CD4-positive, alpha-beta T cell (primary cell): ENCODE measurements at regions of chr5 and their contacts with region 1.

Region 1: GRCh38 chr5:179732417-179732917 is at the start of gene MAML1:
- DNase-seq: peak; percentile 98 to 100 (median 99)
- ATAC-seq: peak; percentile 92
- H3K4me3 ChIP-seq: peak within 1 kb of the TSS; percentile 86
- H3K4me3 Mint-ChIP-seq: peak within 1 kb of the TSS; percentile 99
- H3K27ac ChIP-seq: peak within 1 kb of the TSS; percentile 67 to 84
- H3K27ac Mint-ChIP-seq: peak within 1 kb of the TSS; percentile 84
- H3K4me1 ChIP-seq: peaks cover 42% of the 10 kb centered on the region
- H3K4me1 Mint-ChIP-seq: peaks cover 47% of the 10 kb centered on the region
- H3K27me3 ChIP-seq: no peaks in the 10 kb centered on the region
- H3K27me3 Mint-ChIP-seq: no peaks in the 10 kb centered on the region
- CTCF ChIP-seq: no peak
- total RNA-seq, gene MAML1: 21.8 to 22.2 TPM

Region 2: GRCh38 chr5:179559284-179560252 is 172.9 kb before region 1 on chr5:
- CTCF ChIA-PET with region 1: no interaction called
- POLR2A ChIA-PET with region 1: interaction called, 12 read pairs
- intact Hi-C with region 1: no loop called
- DNase-seq: peak; percentile 65 to 95 (median 84)
- ATAC-seq: peak; percentile 99
- H3K4me3 ChIP-seq: peak overlapping the region; percentile 60
- H3K4me3 Mint-ChIP-seq: peak overlapping the region; percentile 90
- H3K27ac ChIP-seq: peak overlapping the region; percentile 4 to 16
- H3K27ac Mint-ChIP-seq: peak overlapping the region; percentile 89
- H3K4me1 ChIP-seq: peaks cover 10% of the 10 kb centered on the region
- H3K4me1 Mint-ChIP-seq: peaks cover 28% of the 10 kb centered on the region
- H3K27me3 ChIP-seq: no peaks in the 10 kb centered on the region
- H3K27me3 Mint-ChIP-seq: no peaks in the 10 kb centered on the region
- CTCF ChIP-seq: no peak

Region 3: DNA sequence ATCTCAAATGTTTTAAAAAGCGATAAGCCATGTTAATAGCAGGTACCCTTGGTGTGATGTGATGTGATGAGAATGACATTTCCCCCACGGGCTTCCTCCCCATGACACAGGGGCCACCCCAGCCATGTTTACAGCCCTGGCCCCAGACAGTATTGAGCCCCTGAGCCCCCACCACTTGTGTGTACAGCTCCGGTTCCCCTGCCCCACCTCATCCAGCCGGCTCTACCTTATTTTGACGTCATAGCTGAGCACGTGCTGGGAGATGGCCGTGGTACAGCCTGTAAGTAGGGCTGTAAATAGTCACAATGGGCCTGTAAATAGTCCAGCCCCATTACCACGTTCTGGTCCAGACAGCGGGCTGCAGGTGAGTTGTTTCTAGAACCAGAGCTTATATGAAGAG is 84.1 kb before region 1 on chr5:
- CTCF ChIA-PET with region 1: no interaction called
- POLR2A ChIA-PET with region 1: no interaction called
- intact Hi-C with region 1: no loop called
- DNase-seq: no peak
- ATAC-seq: no peak
- H3K4me3 ChIP-seq: no peak overlapping the region
- H3K4me3 Mint-ChIP-seq: no peak overlapping the region
- H3K27ac ChIP-seq: no peak overlapping the region
- H3K27ac Mint-ChIP-seq: no peak overlapping the region
- H3K4me1 ChIP-seq: no peaks in the 10 kb centered on the region
- H3K4me1 Mint-ChIP-seq: no peaks in the 10 kb centered on the region
- H3K27me3 ChIP-seq: no peaks in the 10 kb centered on the region
- H3K27me3 Mint-ChIP-seq: no peaks in the 10 kb centered on the region
- CTCF ChIP-seq: no peak

Region 4: DNA sequence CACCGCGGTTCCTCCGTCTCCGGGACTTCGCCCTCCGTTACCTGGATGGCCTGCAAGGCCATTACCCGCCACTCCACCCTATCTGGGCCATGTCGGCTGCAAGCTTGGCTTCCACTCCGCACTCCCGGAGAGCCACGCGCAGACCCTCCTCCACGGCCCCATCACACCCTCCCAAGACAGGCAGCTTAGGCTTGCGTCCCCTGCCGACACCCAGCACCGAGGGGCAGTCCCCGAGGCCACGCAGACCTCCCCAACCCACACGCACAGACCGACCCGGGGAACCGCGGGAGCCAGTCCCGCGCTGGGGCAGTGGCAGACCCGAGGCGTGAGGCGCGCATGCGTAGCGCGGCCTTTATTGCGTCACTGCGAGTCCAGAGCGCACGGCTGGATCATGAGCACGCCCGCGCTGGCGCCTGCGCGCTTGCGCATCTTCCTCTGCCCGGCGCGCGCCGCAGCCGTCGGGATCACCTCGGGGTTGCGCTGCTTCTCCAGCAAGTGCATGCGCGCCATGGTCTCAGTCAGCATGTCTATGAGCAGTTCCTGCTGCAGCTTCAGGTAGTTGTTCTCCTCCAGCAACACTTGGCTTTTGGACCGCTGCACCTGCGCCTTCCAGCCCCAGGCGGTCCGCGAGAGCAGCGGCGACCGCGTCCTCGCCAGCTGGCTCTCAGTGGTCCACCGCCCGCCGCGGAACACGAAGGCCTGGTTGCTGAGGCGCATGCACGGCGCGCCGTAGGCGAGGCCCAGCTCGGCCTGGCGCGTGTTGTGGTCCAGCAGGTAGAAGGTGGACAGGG is 54.0 kb before region 1 on chr5:
- CTCF ChIA-PET with region 1: no interaction called
- POLR2A ChIA-PET with region 1: interaction called, 19 read pairs
- intact Hi-C with region 1: loop called (anchors 1 to 5 kb)
- DNase-seq: peak; percentile 83 to 98 (median 92)
- ATAC-seq: peak; percentile 86
- H3K4me3 ChIP-seq: peak overlapping the region; percentile 99
- H3K4me3 Mint-ChIP-seq: peak overlapping the region; percentile 97
- H3K27ac ChIP-seq: peak overlapping the region; percentile 83 to 85
- H3K27ac Mint-ChIP-seq: peak overlapping the region; percentile 98
- H3K4me1 ChIP-seq: peaks cover 36% of the 10 kb centered on the region
- H3K4me1 Mint-ChIP-seq: peaks cover 35% of the 10 kb centered on the region
- H3K27me3 ChIP-seq: no peaks in the 10 kb centered on the region
- H3K27me3 Mint-ChIP-seq: no peaks in the 10 kb centered on the region
- CTCF ChIP-seq: no peak

Region 5: DNA sequence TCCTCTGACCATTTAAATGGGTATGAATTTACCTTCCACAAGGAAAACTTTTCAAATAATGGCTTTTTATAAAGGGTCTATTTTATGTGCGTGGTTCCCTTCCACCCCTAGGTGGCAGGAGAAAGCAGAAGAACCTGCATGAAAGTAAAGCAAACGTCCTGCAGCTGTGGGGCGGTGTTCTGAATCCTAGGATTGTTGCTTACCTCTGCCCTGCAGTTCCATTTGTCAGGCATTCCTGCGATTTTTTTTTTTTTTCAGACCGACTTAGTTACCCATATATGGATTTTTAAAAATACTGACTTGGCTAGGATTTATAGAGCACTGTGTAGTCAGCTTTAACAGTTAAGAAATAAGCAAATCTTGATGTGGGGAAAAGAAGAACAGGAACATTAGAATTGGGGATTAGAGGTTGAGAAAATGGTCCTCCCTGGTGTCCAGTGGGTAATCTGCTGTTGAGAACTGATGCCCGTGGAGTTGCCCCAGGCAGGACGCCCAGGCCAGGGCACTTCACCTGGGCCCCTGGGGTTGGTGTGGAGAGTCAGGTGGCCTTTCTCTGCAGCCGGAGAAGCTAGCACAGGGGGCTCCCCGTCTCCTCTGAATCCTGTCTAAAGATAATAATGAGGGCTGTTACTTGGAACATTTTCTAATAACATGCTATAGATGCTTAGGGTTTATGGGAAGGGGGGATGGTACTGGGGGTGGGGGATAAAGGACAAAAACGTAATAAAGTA is 30.9 kb after region 1 on chr5:
- CTCF ChIA-PET with region 1: interaction called, 3 read pairs
- POLR2A ChIA-PET with region 1: interaction called, 24 read pairs
- intact Hi-C with region 1: no loop called
- DNase-seq: peak; percentile 19 to 80 (median 38)
- ATAC-seq: peak; percentile 73
- H3K4me3 ChIP-seq: no peak overlapping the region
- H3K4me3 Mint-ChIP-seq: no peak overlapping the region
- H3K27ac ChIP-seq: no peak overlapping the region
- H3K27ac Mint-ChIP-seq: peak overlapping the region; percentile 52
- H3K4me1 ChIP-seq: peaks cover 53% of the 10 kb centered on the region
- H3K4me1 Mint-ChIP-seq: peaks cover 66% of the 10 kb centered on the region
- H3K27me3 ChIP-seq: no peaks in the 10 kb centered on the region
- H3K27me3 Mint-ChIP-seq: no peaks in the 10 kb centered on the region
- CTCF ChIP-seq: peak; percentile 94

Region 6: DNA sequence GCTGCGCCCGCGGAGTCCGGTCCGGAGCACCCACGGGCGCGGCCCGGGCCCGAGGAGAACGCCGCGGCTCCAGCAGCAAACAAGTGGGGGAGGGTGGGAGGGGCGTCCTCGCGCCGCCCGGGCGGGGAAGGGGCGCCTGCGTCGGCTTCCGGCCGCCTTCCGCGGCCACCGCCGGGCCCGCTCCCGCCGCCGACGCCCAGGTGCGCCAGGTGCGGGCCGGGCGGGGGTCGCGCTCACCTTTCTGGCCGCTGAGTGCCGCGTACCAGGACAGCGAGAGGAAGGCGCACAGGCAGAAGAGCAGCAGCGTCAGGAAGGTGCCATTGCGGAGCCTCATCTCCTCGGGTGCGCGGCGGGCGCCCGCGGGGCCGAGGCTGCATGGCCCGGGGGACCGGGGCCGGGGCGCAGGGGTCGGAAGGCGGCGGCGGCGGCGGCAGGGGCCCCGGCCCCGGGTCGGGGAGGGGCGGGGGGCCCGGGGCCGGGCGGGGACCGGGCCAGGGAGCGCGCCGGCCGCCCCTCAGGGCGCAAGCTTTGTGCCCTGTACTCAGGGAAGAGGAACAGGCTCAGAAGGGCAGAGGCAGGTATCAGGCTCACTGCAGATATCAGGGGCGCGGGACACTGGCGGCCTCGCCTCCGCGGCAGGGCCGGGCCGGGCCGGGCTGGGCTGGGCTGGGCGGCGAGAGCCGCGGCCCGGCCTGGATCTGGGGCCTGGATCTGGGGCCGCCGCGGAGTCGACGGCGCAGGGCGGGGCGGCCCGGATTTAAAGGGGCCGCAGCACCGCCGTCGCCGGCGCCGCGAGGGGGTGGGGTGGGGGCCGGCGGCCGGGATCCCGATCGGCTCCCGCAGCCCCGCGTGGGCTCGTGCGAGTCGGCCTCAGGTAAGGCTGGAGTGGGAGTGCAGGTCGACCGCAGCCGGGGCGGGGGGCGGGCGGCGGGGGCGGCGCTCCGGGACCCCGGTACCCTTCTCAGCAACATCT is 74.1 kb after region 1 on chr5 and contains the start of gene MGAT4B:
- CTCF ChIA-PET with region 1: interaction called, 3 read pairs
- POLR2A ChIA-PET with region 1: interaction called, 10 read pairs
- intact Hi-C with region 1: no loop called
- DNase-seq: peak in 13 of 14 experiments; percentile 39 to 82 (median 62)
- ATAC-seq: peak; percentile 72
- H3K4me3 ChIP-seq: peak within 1 kb of the TSS; percentile 60
- H3K4me3 Mint-ChIP-seq: peak within 1 kb of the TSS; percentile 76
- H3K27ac ChIP-seq: peak within 1 kb of the TSS; percentile 48 to 67
- H3K27ac Mint-ChIP-seq: no peak within 1 kb of the TSS
- H3K4me1 ChIP-seq: peaks cover 54% of the 10 kb centered on the region
- H3K4me1 Mint-ChIP-seq: peaks cover 33% of the 10 kb centered on the region
- H3K27me3 ChIP-seq: no peaks in the 10 kb centered on the region
- H3K27me3 Mint-ChIP-seq: no peaks in the 10 kb centered on the region
- CTCF ChIP-seq: no peak
- total RNA-seq, gene MGAT4B: 141 to 145 TPM